Activated CD4-positive, alpha-beta memory T cell treated with anti-CD3 and anti-CD28 coated beads for 36 hours (primary cell): ENCODE measurements at regions of chr7 and their contacts with region 1.

Region 1: GRCh38 chr7:25054819-25055519 is 70.1 kb downstream of the CYCS start:
- DNase-seq: no peak
- H3K4me3 Mint-ChIP-seq: no peak overlapping the region
- H3K27ac Mint-ChIP-seq: no peak overlapping the region
- H3K4me1 Mint-ChIP-seq: no peaks in the 10 kb centered on the region
- H3K27me3 Mint-ChIP-seq: no peaks in the 10 kb centered on the region

Region 2: DNA sequence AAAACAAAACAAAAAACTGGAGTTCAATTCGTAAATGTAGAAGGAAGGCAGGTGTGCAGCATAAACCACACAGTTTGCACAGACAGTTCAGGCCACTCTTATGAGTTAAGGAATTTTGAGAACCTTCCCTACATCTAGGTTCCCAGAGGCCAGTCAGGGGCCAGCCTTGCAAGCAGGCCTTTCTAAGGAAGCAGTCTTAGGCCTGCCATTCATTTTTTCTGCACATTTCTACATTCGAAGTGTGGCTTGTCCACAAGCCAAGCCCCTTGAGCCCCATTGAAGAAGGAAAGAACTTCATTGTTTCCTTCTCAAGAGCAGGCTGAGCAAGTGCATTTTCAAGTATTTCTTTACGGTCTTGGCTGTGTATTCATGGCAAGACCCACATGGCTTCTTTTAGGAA is 63.6 kb before region 1 on chr7:
- CTCF ChIA-PET with region 1: no interaction called
- POLR2A ChIA-PET with region 1: no interaction called
- intact Hi-C with region 1: loop called (anchors 5 kb)
- DNase-seq: no peak
- H3K4me3 Mint-ChIP-seq: no peak overlapping the region
- H3K27ac Mint-ChIP-seq: no peak overlapping the region
- H3K4me1 Mint-ChIP-seq: no peaks in the 10 kb centered on the region
- H3K27me3 Mint-ChIP-seq: peaks cover 2% of the 10 kb centered on the region

Region 3: DNA sequence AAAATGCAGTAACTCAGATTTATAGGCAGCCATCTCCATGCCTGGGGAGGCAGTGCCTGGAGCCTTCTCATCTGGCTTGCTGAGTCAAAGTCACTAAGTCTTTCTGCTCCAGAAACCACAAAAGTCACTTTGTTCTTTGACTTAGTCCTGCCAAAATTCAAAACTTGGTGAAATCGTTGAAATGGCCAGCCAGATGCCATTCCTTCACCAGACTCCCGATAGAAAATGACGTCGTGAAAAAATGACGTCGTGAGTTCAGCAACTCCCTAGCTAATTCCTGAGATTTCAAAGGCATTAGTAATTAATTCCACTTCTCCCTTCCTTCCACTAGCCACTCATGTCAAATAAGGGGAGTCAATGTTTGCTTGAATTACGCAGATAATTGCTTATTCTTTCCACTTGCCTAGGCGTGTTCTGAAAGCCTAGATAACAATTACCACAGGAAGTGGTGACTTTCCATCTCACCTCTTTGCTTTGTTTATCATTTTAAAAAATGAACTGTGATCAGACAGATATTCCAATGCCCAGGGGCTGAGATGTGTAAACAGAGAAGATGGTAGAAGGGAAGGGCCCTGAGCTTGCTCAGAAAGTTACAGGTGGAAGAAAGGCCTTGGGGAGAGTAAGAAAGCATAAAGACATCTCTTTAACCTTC is 26.5 kb before region 1 on chr7:
- CTCF ChIA-PET with region 1: no interaction called
- POLR2A ChIA-PET with region 1: no interaction called
- intact Hi-C with region 1: no loop called
- DNase-seq: peak; percentile 42
- H3K4me3 Mint-ChIP-seq: peak overlapping the region; percentile 0
- H3K27ac Mint-ChIP-seq: peak overlapping the region; percentile 70
- H3K4me1 Mint-ChIP-seq: peaks cover 48% of the 10 kb centered on the region
- H3K27me3 Mint-ChIP-seq: no peaks in the 10 kb centered on the region

Region 4: DNA sequence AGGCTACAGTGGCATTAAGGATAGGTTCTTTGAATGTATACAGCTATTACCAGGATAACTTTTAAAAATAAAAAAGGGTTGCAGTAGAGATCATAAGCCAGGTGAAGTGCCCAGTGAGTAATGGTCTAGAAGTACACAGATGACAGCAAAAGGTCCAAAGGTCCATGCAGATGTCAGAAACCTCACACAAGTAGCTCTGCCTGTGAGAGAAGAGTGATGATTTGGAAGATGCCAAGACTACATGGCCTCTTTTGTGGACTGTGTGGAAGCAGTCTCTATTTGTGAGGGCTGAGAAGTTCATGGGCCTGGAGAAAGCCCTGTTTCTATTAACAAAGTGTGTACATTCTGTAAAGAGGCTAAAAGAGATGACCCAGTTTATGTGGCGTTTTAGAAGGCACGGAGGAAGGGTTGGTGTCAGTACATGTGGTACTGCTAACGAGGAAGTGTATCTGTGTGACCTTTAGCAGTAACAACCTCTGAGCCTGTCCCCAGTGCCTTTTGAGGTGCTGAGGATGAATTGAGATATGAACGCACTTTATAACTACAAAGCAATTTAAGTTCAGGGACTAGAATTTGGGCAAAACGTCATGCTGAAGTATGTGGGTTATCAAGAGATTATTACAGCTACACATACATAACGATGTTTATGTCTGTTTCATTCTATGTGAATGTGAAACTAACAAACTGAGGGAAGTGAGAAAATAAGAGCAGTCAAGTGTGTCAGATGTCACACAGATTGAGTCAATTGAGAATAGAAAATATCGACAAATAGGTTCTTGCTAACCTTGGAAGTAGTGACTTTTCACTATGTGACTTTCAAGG is 62.5 kb after region 1 on chr7:
- CTCF ChIA-PET with region 1: no interaction called
- POLR2A ChIA-PET with region 1: no interaction called
- intact Hi-C with region 1: no loop called
- DNase-seq: no peak
- H3K4me3 Mint-ChIP-seq: peak overlapping the region; percentile 16
- H3K27ac Mint-ChIP-seq: peak overlapping the region; percentile 77
- H3K4me1 Mint-ChIP-seq: peaks cover 48% of the 10 kb centered on the region
- H3K27me3 Mint-ChIP-seq: no peaks in the 10 kb centered on the region